Activated T-helper 1 cell treated with anti-CD3 and anti-CD28 coated beads, Interleukin-12 subunit alpha, Interleukin-12 subunit beta, Interleukin-2, Interleukin-4 antibody, amounts not matched to agents 30 ng/mL and 10 ng/mL and 1 ng/mL, durations not matched to agents 14 hours and 24 hours and 36 hours (primary cell): ENCODE measurements at regions of chr12 and their contacts with region 1.

Region 1: GRCh38 chr12:11958221-11959091 is 112.3 kb upstream of the BCL2L14 start:
- DNase-seq: peak; percentile 55
- H3K4me3 Mint-ChIP-seq: peak overlapping the region; percentile 29
- H3K27ac Mint-ChIP-seq: peak overlapping the region; percentile 89
- H3K4me1 Mint-ChIP-seq: peaks cover 76% of the 10 kb centered on the region
- H3K27me3 Mint-ChIP-seq: no peaks in the 10 kb centered on the region

Region 2: DNA sequence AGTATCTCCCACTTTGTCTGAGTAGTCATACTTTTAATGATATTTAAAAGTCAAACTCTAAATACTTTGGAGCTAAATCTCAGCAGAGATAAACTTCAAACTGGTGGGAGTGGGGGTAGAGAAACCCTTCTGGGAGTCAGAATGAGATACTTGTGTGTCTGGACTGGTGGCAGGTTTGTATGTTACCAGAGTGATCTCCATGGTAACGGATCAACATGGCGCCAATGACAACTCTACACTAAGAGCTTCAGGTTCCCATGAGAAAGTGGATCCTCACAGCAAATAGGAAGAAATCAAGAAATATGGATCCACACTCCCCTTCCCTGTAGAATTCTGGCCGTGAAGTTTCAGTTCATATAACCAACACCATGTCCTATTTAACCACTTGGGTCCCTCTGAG is 187.1 kb before region 1 on chr12:
- intact Hi-C with region 1: loop called (anchors 1 kb)
- DNase-seq: no peak
- H3K4me3 Mint-ChIP-seq: no peak overlapping the region
- H3K27ac Mint-ChIP-seq: peak overlapping the region; percentile 98
- H3K4me1 Mint-ChIP-seq: peaks cover 96% of the 10 kb centered on the region
- H3K27me3 Mint-ChIP-seq: no peaks in the 10 kb centered on the region